IMR-90 (cell line): ENCODE measurements at regions of chr21 and their contacts with region 1.

Region 1: DNA sequence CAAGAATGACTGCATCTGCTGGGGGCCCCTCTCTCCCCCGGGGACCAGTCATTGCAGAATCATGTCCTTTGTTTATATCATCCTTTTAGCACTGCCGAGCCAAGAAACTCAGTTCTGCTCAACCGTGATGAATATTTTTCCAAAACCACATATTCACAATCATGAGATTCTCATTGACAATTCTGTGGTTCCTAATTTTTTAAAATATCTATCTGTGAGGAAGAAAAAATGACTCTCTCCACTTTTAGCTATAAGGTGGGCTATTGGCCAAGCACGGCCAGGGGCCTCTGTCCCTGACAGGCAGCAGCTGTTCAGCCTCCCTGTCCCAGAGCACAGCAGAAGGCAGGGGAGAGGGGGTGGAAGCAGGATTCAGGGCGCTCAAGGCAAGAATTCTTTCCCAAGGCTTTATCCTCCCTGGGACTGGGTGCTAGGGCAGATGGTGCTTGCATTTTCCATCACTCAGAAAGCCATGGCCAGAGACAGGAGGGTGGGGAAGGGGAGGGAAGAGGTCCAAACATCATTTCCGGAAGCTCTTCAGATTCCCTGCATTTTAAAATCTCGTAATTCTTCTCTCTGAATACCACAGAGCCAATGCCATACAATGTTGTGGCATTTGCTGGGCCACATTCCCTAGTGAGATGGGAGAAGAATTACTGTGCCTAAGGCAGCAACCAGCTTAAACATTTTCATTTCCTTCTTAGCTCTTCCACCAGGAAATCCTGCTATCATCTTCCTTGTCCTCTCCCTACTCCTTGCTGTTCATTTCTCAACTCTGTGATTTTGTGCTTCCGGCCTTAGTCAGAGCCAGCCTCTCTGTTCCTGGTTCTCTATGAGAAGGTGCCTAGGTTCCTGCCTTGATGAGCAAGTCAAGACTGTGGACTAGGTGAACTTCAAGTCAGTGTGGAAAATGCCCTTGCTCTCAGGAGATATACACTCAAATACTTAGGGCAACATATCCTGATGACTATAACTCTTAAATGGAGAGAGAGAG is 60.3 kb downstream of the KCNJ6 start:
- DNase-seq: peak; percentile 89
- ATAC-seq: peak; percentile 88
- H3K4me3 ChIP-seq: no peak overlapping the region
- H3K27ac ChIP-seq: peak overlapping the region; percentile 95
- H3K4me1 ChIP-seq: peaks cover 14% of the 10 kb centered on the region
- H3K27me3 ChIP-seq: no peaks in the 10 kb centered on the region
- CTCF ChIP-seq: no peak
- POLR2A ChIP-seq: no peak
- RAD21 ChIP-seq: peak; percentile 19; the same call in 1 of the 2 replicates

Region 2: DNA sequence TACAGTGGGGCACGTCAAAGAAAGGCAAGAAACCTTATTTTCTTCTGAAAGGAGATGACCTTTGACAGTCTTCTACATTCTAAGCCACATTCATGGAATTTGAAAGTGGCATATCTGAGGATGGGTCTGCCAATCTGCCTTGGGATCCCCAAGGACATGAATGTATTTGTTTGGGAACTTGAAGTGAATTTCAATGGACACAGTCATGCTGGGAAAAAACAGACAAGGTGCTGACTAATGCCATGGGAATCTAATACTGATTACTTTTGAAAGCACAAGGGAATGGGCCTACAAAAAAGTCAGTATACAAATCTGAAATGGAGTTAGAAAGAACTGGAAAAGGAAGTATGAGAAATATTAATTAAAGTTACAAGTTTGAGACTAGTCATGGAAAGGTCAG is 68.5 kb before region 1 on chr21:
- CTCF ChIA-PET with region 1: no interaction called
- POLR2A ChIA-PET with region 1: no interaction called
- dilution Hi-C with region 1: no loop called
- in situ Hi-C with region 1: no loop called
- intact Hi-C with region 1: loop called (anchors 2 kb)
- DNase-seq: peak; percentile 93
- ATAC-seq: peak; percentile 92
- H3K4me3 ChIP-seq: no peak overlapping the region
- H3K27ac ChIP-seq: peak overlapping the region; percentile 93
- H3K4me1 ChIP-seq: peaks cover 10% of the 10 kb centered on the region
- H3K27me3 ChIP-seq: no peaks in the 10 kb centered on the region
- CTCF ChIP-seq: no peak
- POLR2A ChIP-seq: no peak
- RAD21 ChIP-seq: no peak

Region 3: DNA sequence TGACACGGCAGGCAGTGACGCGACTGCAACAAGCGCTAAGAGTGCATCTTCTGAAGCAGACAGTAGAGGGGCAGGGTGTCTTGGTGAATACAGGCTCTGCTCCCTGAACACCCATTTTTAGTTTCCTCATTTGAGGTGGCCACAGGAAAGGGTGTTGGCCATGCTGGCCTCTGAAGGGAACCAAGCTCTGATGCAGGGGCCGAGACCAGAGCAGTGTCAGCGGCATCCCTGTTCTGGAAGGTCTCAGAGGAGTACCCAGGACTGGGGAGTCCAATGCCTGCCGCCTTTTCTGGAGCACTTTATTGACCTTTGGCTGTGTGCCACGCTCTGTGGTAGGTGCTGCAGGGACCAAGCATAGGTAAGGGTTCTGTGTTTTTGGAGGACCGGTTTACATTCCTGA is 40.0 kb before region 1 on chr21:
- CTCF ChIA-PET with region 1: no interaction called
- POLR2A ChIA-PET with region 1: no interaction called
- dilution Hi-C with region 1: no loop called
- in situ Hi-C with region 1: no loop called
- intact Hi-C with region 1: loop called (anchors 5 kb)
- DNase-seq: no peak
- ATAC-seq: no peak
- H3K4me3 ChIP-seq: no peak overlapping the region
- H3K27ac ChIP-seq: no peak overlapping the region
- H3K4me1 ChIP-seq: peaks cover 10% of the 10 kb centered on the region
- H3K27me3 ChIP-seq: no peaks in the 10 kb centered on the region
- CTCF ChIP-seq: no peak
- POLR2A ChIP-seq: no peak
- RAD21 ChIP-seq: no peak

Region 4: GRCh38 chr21:37871121-37871862 is 15.4 kb after region 1 on chr21:
- CTCF ChIA-PET with region 1: interaction called, 4 read pairs
- POLR2A ChIA-PET with region 1: interaction called, 11 read pairs
- dilution Hi-C with region 1: no loop called
- in situ Hi-C with region 1: no loop called
- intact Hi-C with region 1: no loop called
- DNase-seq: peak; percentile 91
- ATAC-seq: peak; percentile 85
- H3K4me3 ChIP-seq: no peak overlapping the region
- H3K27ac ChIP-seq: peak overlapping the region; percentile 3; the same call in 1 of the 2 replicates
- H3K4me1 ChIP-seq: peaks cover 12% of the 10 kb centered on the region
- H3K27me3 ChIP-seq: no peaks in the 10 kb centered on the region
- CTCF ChIP-seq: no peak
- POLR2A ChIP-seq: no peak
- RAD21 ChIP-seq: 0 out of 2 replicates have a peak, but pooled peaks have one; percentile 21

Region 5: GRCh38 chr21:37916310-37917051 is 60.6 kb after region 1 on chr21 and contains the start of gene KCNJ6:
- CTCF ChIA-PET with region 1: no interaction called
- POLR2A ChIA-PET with region 1: no interaction called
- dilution Hi-C with region 1: no loop called
- in situ Hi-C with region 1: no loop called
- intact Hi-C with region 1: loop called (anchors 2 kb)
- DNase-seq: peak; percentile 52
- ATAC-seq: peak; percentile 89
- H3K4me3 ChIP-seq: peak within 1 kb of the TSS; percentile 14
- H3K27ac ChIP-seq: no peak within 1 kb of the TSS; the same call in 1 of the 2 replicates
- H3K4me1 ChIP-seq: peaks cover 6% of the 10 kb centered on the region
- H3K27me3 ChIP-seq: peaks cover 37% of the 10 kb centered on the region
- CTCF ChIP-seq: peak; percentile 91
- POLR2A ChIP-seq: no peak
- RAD21 ChIP-seq: peak; percentile 90
- total RNA-seq, gene KCNJ6: under 0.01 TPM in 2 replicates

Region 6: DNA sequence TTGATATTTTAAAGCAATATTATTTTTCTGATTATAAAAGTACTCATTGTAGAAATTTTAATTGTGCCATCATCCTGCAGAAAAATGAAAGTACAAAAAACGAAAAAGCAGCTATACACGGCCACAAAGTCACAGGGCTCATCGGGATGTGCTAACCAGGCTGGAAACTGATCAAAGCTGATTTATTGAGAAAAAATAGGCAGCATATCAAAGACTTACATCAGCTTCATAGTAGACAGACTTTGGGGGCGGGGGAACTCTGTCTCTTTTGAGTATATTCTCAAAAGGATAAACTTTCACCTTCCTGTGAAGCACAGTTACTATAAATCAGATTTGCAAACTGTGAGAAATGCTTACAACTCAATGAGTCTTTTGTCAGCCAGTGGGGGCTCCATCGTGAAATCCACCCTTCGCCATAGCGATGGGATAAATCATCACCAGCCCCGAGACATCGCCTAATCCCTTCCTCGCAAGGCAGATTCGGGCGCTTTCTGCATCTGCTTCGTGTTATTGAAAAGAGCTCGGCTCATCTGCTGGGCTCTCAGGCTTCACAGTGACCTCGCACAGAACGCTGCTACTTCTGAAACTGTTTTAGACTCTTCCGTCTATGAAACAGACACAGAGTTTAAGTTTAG is 711.5 kb after region 1 on chr21:
- CTCF ChIA-PET with region 1: no interaction called
- POLR2A ChIA-PET with region 1: no interaction called
- dilution Hi-C with region 1: no loop called
- in situ Hi-C with region 1: no loop called
- intact Hi-C with region 1: no loop called
- DNase-seq: peak; percentile 6
- ATAC-seq: peak; percentile 72
- H3K4me3 ChIP-seq: no peak overlapping the region
- H3K27ac ChIP-seq: no peak overlapping the region
- H3K4me1 ChIP-seq: no peaks in the 10 kb centered on the region
- H3K27me3 ChIP-seq: peaks cover 20% of the 10 kb centered on the region
- CTCF ChIP-seq: no peak
- POLR2A ChIP-seq: no peak
- RAD21 ChIP-seq: no peak